RWPE1 (cell line): ENCODE measurements at regions of chr1 and their contacts with region 1.

Region 1: DNA sequence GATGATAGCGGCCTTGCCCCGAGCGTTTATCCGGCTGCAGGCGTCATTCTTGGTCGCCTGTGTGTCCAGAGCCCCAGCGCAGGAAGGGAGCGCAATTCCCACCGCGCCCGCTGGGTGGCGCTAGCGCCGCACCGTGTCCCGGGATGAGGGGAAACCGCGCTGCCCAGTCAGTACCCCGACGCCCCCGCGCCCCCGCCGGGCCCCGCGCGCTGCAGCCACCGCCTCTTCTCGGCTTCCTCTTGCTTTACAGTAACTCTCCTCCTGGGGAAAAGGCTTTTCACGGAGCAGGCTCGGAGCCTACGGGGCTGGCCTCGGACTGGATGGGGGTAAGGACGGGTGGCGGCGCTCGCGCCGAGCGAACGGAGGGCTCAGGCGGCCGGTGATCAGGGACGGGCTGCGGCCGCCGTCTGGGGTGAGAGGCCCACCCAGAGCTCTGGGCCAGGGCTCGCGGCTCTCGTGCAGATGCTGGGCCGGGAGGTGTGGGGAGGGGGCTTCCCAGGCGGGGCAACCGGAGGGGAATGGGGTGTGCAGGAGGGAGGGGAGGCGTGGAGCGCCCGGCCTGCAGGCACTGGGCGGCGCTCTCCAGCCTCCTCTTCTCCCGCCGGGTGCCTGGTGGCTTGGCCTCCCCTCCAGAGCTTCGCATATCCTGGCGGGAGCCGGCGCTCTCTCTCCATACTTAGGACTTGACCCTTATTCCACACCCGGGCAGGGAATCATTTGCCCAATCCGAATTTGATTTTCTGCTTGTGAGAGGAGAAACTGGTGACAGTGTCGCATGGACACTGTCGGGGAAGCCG is 29.8 kb downstream of the TEX35 start:
- DNase-seq: peak; percentile 83
- H3K27ac ChIP-seq: peak overlapping the region; percentile 78
- CTCF ChIP-seq: peak; percentile 97

Region 2: GRCh38 chr1:179002552-179003345 is 460.0 kb after region 1 on chr1:
- CTCF ChIA-PET with region 1: interaction called, 16 read pairs
- POLR2A ChIA-PET with region 1: interaction called, 3 read pairs
- DNase-seq: peak; percentile 38
- H3K27ac ChIP-seq: no peak overlapping the region
- CTCF ChIP-seq: peak; percentile 85